ENCODE measurements at regions of chr19 and their contacts with region 1.

Region 1: GRCh38 chr19:46081928-46082727 is 41.3 kb upstream of the IGFL4 start:
- DNase-seq: no peak
- ATAC-seq: peak; percentile 56

Region 2: DNA sequence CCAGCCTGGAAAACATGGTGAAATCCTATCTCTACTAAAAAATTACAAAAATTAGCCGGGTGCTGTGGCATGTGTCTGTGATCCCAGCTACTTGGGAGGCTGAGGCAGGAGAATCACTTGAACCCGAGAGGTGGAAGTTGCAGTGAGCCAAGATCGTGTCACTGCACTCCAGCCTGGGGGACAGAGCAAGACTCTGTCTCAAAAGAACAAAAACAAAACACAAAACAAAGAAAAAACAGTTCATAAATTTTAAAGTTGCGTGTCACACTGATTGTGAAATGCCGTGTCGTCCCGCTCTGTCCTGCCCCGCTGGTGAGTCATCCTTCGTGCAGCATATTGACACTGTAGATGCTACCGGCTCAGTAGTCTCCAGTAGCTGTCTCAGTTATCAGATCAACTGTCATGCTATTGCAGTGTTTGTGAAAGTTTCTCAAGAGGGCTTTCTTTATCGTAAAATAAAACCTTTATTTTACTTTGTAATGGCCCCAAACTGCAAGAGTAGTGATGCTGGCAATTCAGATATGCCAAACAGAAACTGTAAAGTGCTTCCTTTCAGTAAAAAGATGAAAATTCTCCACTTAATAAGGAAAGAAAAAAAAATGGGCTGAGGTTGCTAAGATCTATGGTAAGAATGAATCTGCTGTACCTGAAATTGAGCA is 111.0 kb after region 1 on chr19:
- intact Hi-C with region 1: loop called (anchors 5 kb)
- DNase-seq: no peak
- ATAC-seq: peak; percentile 46

Region 3: DNA sequence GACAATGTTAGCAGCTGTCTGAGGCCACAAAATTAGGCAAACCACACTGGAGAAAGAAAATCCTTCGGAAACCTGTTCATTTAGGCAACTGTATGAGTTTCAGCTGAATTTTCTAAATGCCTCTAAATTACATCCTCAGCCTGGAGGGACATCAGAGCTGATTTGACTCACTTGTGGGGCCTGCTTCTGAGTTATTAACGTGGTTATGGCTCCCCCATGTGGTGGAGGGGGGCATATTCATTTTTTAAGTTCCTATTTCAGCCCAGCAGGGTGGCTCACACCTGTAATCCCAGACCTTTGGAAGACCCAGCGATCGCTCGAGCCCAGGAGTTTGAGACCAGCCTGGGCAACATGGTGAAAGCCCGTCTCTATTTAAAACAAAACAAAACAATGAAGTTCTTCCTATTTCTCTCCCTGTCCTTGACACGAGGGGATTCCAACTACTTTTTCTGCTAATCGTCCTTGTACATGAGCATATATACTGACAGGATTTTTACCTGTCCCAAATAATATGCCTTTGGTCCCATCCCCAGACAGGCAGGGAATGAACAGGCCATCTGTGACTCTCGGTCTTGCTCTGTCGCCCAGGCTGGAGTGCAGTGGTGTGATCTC is 183.2 kb after region 1 on chr19:
- intact Hi-C with region 1: loop called (anchors 5 kb)
- DNase-seq: no peak
- ATAC-seq: peak; percentile 86